Common myeloid progenitor, CD34-positive (primary cell): ENCODE measurements at regions of chr4 and their contacts with region 1.

Region 1: GRCh38 chr4:184526228-184526627 is 51.9 kb upstream of the IRF2 start:
- DNase-seq: no peak
- H3K4me3 ChIP-seq: no peak overlapping the region
- H3K27ac ChIP-seq: no peak overlapping the region
- H3K4me1 ChIP-seq: peaks cover 2 to 26% (median 6%) of the 10 kb centered on the region in 4 experiments
- H3K27me3 ChIP-seq: no peaks in the 10 kb centered on the region

Region 2: GRCh38 chr4:184282251-184282713 is 243.9 kb before region 1 on chr4:
- CTCF ChIA-PET with region 1: no interaction called
- POLR2A ChIA-PET with region 1: no interaction called
- DNase-seq: peak; percentile 22 to 43 (median 34)
- H3K4me3 ChIP-seq: no peak overlapping the region
- H3K27ac ChIP-seq: no peak overlapping the region
- H3K4me1 ChIP-seq: peaks cover 0 to 8% (median 0%) of the 10 kb centered on the region in 4 experiments
- H3K27me3 ChIP-seq: no peaks in the 10 kb centered on the region

Region 3: DNA sequence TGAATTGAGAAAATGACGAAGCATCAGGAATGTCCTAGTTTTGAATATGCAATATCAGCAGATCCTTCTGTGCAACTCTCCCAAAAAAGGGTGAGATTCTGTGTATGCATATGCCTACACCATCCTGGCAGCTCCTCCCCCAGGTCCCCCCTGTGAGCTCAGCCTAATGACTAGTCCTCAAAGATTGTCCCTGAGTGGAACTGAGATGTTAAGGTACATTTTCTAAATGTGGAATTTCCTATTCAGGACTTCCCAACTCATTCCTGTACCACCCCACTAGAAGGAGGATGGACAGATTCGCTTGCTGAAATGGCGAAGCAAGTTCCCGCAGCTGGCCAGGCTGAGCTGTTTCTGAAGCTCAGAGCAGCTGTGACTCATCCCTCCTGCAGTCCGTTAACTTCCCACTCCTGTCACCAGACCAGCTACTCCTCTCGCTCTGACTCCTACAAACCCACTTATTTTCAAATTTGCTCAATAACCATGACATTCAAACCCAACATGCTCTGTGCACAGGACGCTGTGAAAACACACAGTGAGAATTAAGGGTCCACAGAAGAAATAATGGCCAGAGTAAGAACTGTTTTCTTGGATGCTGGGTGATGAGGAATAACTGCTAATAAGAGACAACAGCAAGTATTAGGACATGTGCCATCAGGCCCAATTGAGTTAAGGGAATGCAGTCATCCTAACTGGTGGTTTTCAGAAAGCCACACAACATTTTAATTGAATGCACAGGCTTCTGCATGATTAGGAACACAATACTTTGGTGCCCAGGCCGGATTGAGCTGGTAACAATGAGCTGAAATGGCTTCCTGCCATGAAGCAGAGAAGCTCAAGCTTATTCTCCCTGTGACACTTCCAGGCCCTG is 11.9 kb before region 1 on chr4:
- CTCF ChIA-PET with region 1: interaction called, 12 read pairs
- POLR2A ChIA-PET with region 1: no interaction called
- DNase-seq: peak in 2 of 3 donors; percentile 68 to 75
- H3K4me3 ChIP-seq: no peak overlapping the region
- H3K27ac ChIP-seq: no peak overlapping the region
- H3K4me1 ChIP-seq: peaks cover 3 to 16% (median 9%) of the 10 kb centered on the region in 4 experiments
- H3K27me3 ChIP-seq: no peaks in the 10 kb centered on the region

Region 4: GRCh38 chr4:184563621-184564020 is 37.4 kb after region 1 on chr4:
- CTCF ChIA-PET with region 1: no interaction called
- POLR2A ChIA-PET with region 1: no interaction called
- DNase-seq: no peak
- H3K4me3 ChIP-seq: no peak overlapping the region
- H3K27ac ChIP-seq: no peak overlapping the region
- H3K4me1 ChIP-seq: no peaks in the 10 kb centered on the region
- H3K27me3 ChIP-seq: no peaks in the 10 kb centered on the region

Region 5: DNA sequence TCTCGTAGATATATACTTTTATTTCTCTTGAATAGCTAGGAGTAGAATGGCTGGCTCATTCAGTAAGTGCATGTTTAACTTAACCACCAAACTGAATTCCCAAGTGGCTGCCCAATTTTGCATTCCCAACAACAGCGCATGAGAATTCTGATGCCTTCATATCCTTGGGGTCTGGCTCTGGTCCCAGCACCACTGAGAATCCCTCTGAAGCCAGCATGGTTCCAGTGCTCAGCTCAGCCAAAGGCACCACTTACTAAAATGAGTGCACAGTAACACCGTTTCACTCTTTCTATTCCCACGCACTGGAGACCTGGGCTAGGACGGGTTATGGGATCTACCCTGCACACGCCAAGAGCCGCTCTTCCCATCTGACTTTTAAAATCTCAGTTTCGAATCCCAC is 62.7 kb after region 1 on chr4:
- CTCF ChIA-PET with region 1: no interaction called
- POLR2A ChIA-PET with region 1: no interaction called
- DNase-seq: no peak
- H3K4me3 ChIP-seq: no peak overlapping the region
- H3K27ac ChIP-seq: no peak overlapping the region
- H3K4me1 ChIP-seq: no peaks in the 10 kb centered on the region
- H3K27me3 ChIP-seq: no peaks in the 10 kb centered on the region